ENCODE measurements at regions of chr2 and their contacts with region 1.

Region 1: DNA sequence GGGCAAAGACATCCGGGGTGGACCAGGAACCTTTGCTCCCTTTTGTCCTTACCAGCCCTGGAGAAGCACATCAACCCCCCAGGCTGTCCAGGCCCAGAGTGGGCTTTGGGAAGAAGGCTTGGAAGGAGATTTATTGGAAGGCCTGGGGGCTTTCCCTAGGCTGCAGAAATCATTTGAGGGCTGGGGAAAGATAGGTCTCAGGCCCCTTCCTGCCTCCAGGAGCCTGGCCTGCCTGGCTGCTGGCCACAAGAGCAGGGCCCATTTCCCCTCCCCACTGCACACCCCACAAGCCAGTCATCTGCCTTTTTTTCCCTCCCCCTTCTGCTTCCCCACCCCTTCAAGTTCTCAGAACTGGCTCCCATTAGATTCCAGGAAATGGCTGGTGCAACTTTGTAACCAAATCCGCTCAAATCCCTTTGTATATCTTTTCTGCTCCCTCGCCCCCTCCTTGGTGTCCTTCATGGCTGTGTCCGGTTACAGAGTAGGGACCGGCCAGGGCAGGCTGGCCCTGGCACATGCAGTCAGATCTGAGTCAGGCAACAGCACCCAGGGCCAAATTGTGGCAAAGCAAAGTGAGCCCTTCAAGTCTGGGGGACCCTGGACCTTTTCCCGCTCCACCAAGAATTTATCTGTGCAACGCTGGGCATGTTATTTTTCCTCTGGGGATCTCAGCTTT is 20.8 kb upstream of the TNP1 start:
- DNase-seq: peak; percentile 86
- ATAC-seq: peak; percentile 90
- H3K4me3 ChIP-seq: no peak overlapping the region
- H3K27ac ChIP-seq: peak overlapping the region; percentile 91
- H3K4me1 ChIP-seq: peaks cover 15% of the 10 kb centered on the region
- H3K27me3 ChIP-seq: no peaks in the 10 kb centered on the region
- CTCF ChIP-seq: no peak
- POLR2A ChIP-seq: no peak
- RAD21 ChIP-seq: no peak

Region 2: GRCh38 chr2:217054791-217055190 is 174.1 kb after region 1 on chr2:
- CTCF ChIA-PET with region 1: no interaction called
- POLR2A ChIA-PET with region 1: no interaction called
- dilution Hi-C with region 1: no loop called
- in situ Hi-C with region 1: no loop called
- intact Hi-C with region 1: loop called (anchors 5 kb)
- DNase-seq: no peak
- ATAC-seq: peak; percentile 16; the same call in 1 of the 2 replicates
- H3K4me3 ChIP-seq: no peak overlapping the region
- H3K27ac ChIP-seq: peak overlapping the region; percentile 13; the same call in 1 of the 2 replicates
- H3K4me1 ChIP-seq: peaks cover 3% of the 10 kb centered on the region
- H3K27me3 ChIP-seq: no peaks in the 10 kb centered on the region; the same call in 1 of the 2 replicates
- CTCF ChIP-seq: no peak
- POLR2A ChIP-seq: no peak
- RAD21 ChIP-seq: no peak

Measured in IMR-90 (cell line).